Activated naive CD4-positive, alpha-beta T cell treated with anti-CD3 and anti-CD28 coated beads for 36 hours (primary cell): ENCODE measurements at regions of chr9 and their contacts with region 1.

Region 1: GRCh38 chr9:98775831-98776441 is 20.4 kb downstream of the ANKS6 start:
- DNase-seq: peak; percentile 55
- H3K4me3 Mint-ChIP-seq: no peak overlapping the region
- H3K27ac Mint-ChIP-seq: no peak overlapping the region
- H3K4me1 Mint-ChIP-seq: no peaks in the 10 kb centered on the region
- H3K27me3 Mint-ChIP-seq: no peaks in the 10 kb centered on the region

Region 2: GRCh38 chr9:98207606-98208005 is 568.3 kb before region 1 on chr9:
- CTCF ChIA-PET with region 1: no interaction called
- intact Hi-C with region 1: loop called (anchors 2 kb)
- DNase-seq: no peak
- H3K4me3 Mint-ChIP-seq: no peak overlapping the region
- H3K27ac Mint-ChIP-seq: no peak overlapping the region
- H3K4me1 Mint-ChIP-seq: peaks cover 2% of the 10 kb centered on the region
- H3K27me3 Mint-ChIP-seq: no peaks in the 10 kb centered on the region

Region 3: GRCh38 chr9:98315551-98316060 is 460.3 kb before region 1 on chr9:
- CTCF ChIA-PET with region 1: interaction called, 14 read pairs
- intact Hi-C with region 1: loop called (anchors 1 kb)
- DNase-seq: peak; percentile 89
- H3K4me3 Mint-ChIP-seq: no peak overlapping the region
- H3K27ac Mint-ChIP-seq: no peak overlapping the region
- H3K4me1 Mint-ChIP-seq: no peaks in the 10 kb centered on the region
- H3K27me3 Mint-ChIP-seq: no peaks in the 10 kb centered on the region

Region 4: DNA sequence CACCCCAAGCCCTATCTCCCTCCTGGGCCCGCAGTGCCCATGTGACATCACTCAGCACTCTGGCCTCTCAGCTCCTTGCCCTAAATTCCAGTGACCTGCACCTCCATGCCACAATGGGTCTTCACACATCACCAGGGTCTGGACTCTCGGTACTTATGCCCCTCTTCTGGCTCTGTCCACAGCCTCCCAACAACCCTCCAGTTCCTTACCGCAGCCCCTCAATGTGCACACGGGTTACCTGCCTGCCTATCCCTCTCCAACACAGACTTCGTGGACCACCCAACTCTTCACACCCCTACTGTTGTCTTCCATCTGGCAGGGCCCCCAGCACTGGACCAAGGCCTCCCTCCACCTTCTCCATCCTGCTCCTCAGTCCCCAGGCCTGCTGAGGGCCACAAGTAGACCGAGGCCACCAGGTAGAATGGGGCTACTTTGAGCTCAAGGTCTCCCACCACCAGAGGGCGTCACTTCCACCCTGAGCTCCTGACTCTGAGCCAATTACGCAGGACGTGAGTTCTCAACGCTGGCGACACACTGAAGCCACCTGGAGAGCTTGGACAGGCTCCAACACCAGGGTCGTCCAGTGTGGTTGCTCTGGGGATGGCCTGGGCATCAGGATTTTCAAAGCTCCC is 239.3 kb before region 1 on chr9:
- CTCF ChIA-PET with region 1: interaction called, 9 read pairs
- intact Hi-C with region 1: loop called (anchors 2 kb)
- DNase-seq: peak; percentile 61
- H3K4me3 Mint-ChIP-seq: no peak overlapping the region
- H3K27ac Mint-ChIP-seq: no peak overlapping the region
- H3K4me1 Mint-ChIP-seq: no peaks in the 10 kb centered on the region
- H3K27me3 Mint-ChIP-seq: peaks cover 3% of the 10 kb centered on the region

Region 5: DNA sequence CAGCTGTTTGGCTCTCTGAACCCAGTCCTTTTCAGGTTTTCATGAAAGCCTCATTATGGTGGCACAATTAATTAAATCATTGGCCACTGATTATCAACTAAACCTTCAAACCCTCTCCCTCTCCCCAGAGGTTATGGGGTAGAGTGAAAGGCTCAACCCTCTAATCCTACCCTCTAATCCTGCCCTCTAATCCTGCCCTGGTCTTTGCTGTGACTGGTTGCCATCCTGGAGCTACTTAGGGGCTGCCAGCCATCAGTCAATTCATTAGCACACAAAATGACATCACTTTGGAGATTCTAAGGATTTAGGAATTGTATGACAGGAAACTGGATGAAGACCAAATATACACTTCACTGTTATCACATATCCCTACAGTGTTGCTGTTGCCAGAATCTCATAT is 15.7 kb before region 1 on chr9:
- CTCF ChIA-PET with region 1: interaction called, 25 read pairs
- intact Hi-C with region 1: no loop called
- DNase-seq: no peak
- H3K4me3 Mint-ChIP-seq: no peak overlapping the region
- H3K27ac Mint-ChIP-seq: no peak overlapping the region
- H3K4me1 Mint-ChIP-seq: no peaks in the 10 kb centered on the region
- H3K27me3 Mint-ChIP-seq: no peaks in the 10 kb centered on the region

Region 6: GRCh38 chr9:98791147-98792095 is 15.5 kb after region 1 on chr9:
- CTCF ChIA-PET with region 1: interaction called, 30 read pairs
- intact Hi-C with region 1: no loop called
- DNase-seq: peak; percentile 70
- H3K4me3 Mint-ChIP-seq: no peak overlapping the region
- H3K27ac Mint-ChIP-seq: no peak overlapping the region
- H3K4me1 Mint-ChIP-seq: peaks cover 30% of the 10 kb centered on the region
- H3K27me3 Mint-ChIP-seq: no peaks in the 10 kb centered on the region